ENCODE measurements at regions of chr6 and their contacts with region 1.

Region 1: DNA sequence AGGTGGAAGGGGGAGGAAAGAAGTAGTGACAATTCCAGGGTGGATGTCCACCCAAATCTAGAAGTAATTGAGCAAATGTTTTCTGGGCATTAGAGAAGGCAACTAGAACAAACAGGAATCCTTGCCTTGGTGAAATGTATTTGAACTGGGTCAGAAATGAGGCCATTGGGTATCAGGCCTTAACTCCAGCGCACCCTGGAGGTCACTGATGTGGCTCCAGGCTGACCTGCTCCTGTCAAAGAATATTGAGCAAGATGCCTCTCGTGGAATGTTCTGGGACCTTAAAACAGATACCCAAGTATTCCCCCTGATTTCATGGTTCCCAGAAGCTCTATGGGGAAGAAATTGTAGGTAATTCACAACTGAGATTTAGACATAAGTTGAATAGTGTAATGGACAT is 6.9 kb downstream of the HLA-DPB1 start:
- DNase-seq: peak; percentile 61
- ATAC-seq: no peak

Region 2: DNA sequence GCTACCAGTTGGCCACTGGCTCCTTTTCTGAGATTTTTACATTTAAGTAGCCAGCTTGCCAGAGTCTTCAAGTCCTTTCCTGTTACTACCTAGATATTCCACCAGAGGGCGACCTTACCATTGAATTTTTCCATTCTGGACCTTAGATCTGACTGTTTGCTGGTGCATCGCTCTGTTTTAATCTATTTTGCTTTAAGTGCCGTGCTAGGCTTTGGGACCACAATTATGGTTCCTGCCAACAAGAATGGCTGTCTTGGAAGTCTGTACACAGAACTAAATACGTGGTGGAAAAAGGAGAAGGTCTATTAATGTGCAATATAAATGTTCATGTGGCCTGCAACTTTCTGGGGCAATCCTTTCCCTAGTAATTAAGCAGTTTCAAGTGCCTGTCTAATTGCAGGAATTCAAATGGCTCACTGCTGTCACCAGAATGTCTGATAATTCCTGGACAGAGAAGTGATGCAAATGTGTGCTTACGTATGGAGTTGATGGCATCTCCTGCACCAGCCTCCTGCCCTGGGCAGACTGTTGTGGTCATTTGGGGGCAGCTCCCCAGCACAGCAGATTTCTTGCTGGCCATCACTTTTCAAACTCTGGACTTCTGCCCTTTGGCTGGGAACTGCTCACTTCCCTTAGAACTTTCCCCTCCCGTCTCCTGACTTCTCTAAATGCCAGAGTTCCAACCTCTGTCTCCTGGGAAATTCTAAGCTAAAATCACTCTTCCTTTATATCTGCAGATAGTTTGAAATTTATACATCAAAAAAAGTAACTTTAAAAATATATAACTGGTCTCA is 67.7 kb before region 1 on chr6:
- intact Hi-C with region 1: loop called (anchors 5 kb)
- DNase-seq: no peak
- ATAC-seq: peak; percentile 80

Region 3: DNA sequence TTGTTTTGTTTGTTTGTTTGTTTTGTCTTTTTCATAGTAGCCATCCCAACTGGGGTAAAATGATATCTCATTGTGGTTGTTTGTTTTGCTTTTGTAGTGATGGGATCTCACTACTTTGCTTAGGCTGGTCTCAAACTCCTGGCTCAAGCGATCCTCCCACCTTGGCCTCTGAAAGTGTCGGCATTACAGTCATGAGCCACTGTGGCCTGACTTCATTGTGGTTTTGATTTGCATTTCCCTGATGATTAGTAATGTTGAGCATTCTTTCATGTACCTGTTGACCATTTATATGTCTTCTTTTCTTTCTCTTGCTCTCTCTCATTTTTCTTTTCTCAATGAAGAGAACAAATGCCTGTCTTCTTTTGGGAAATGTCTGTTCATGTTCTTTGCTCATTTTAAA is 42.5 kb before region 1 on chr6:
- intact Hi-C with region 1: no loop called
- DNase-seq: no peak
- ATAC-seq: no peak

Measured in Right ventricle myocardium superior (tissue), 1 donor.